ENCODE measurements at regions of chr16 and their contacts with region 1.

Region 1: DNA sequence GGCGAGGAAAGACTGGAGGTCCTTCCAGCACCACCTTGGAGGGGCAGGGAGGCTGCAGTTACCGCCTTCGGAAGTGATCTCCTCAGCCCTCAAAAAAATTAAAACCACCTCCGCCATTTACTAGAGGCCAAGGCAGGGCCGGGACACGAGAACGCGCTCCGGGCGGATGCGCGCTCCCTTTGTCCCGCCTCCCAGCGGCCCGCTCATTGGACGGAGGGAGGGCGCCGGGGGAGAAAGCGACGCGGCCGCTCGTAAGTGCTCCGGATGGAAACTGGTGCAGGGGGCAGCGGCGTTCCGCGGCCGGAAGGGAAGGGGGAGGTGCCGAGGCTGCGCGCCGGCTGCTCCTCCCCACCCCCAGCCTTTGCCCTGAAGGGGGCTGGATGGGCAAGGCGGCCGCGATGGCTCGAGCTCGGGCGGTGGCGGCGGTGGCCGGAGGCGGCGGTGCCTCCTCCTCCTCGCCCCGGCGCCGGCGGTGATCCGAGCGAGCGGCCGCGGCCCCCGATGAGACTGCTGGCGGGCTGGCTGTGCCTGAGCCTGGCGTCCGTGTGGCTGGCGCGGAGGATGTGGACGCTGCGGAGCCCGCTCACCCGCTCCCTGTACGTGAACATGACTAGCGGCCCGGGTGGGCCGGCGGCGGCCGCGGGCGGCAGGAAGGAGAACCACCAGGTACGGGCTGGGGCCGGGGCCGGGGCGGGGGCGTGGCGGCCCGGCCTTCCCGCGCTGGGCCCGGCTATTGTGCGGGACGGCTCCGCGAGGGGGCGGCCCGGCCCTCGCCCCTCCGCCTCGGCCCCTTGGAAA is at the start of gene METTL9:
- DNase-seq: peak; percentile 95 to 98 (median 98)
- ATAC-seq: peak; percentile 99
- H3K4me3 ChIP-seq: peak within 1 kb of the TSS; percentile 81
- H3K27ac ChIP-seq: peak within 1 kb of the TSS; percentile 91
- H3K4me1 ChIP-seq: peaks cover 2% of the 10 kb centered on the region
- H3K27me3 ChIP-seq: no peaks in the 10 kb centered on the region
- total RNA-seq, gene METTL9: 59.4 to 63.2 (median 61.2) TPM

Region 2: DNA sequence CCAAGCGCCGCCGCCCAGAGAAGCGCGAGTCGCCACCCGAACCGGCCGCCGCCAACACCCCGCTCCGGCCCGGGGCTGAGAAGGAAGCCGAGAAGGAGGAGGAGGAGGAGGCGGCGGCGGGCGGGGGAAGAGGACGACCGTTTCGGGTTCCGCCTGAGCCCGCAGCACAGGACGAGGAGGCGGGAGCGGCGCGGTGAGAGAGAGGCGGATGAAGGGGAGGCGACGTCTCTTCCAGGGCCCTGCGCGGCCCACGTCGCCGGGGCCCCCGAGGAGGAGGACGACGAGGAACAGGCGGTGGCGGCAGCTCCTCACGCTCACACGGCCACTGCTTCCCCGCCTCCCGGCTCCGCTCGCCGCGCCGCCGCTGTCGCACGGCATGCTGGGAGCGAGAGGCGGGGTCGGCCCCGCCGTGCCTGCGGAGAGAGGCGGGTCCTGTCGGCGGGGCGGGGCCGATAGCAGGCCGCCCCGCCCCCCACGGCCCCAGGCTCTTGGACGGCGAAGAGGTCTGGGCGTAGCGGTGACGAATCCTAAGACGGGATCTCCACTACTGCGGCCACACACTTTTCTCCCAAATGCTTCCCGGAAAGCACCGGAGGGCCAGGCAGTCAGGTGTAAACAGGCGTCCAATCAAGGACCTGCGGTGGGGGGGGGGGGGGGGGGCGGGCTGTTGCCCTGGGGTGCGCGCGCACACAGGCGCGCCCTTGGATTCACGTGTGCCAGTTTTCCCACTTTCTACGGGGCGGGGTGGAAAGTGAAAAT is 97.3 kb before region 1 on chr16:
- intact Hi-C with region 1: no loop called
- DNase-seq: peak; percentile 96 to 99 (median 98)
- ATAC-seq: peak; percentile 98
- H3K4me3 ChIP-seq: peak overlapping the region; percentile 86
- H3K27ac ChIP-seq: peak overlapping the region; percentile 94
- H3K4me1 ChIP-seq: peaks cover 2% of the 10 kb centered on the region
- H3K27me3 ChIP-seq: no peaks in the 10 kb centered on the region

Region 3: DNA sequence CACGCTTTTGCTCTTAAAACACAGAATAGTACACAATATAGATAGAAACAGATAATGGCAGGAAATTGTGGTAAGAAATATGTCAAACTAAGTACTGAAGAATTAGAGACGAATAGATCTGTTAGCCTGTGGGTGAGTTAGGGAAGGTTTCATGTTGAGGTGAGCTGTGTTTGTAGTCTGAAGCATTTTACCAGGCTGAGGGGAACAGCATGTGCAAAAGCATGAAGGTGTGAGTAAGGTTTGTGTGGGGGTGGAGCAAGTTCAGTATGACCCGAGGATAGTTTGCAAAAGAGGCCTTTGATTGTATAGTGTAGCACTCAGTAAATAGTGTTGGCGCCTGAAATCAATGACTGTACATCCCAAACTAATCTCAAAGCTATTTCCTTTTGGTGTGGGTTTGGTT is 39.1 kb after region 1 on chr16:
- intact Hi-C with region 1: loop called in 1 of 4 experiments (anchors 5 kb)
- DNase-seq: no peak
- ATAC-seq: no peak
- H3K4me3 ChIP-seq: no peak overlapping the region
- H3K27ac ChIP-seq: no peak overlapping the region
- H3K4me1 ChIP-seq: peaks cover 3% of the 10 kb centered on the region
- H3K27me3 ChIP-seq: no peaks in the 10 kb centered on the region

Measured in right cardiac atrium (tissue), 5 donors.